Activated T-helper 2 cell treated with anti-CD3 and anti-CD28 coated beads, Interferon-gamma antibody, Interleukin-2, Interleukin-4, amounts not matched to agents 10 μg/mL and 5 μg/mL and 100 μg/mL, durations not matched to agents 14 hours and 24 hours and 36 hours (primary cell): ENCODE measurements at regions of chr15 and their contacts with region 1.

Region 1: GRCh38 chr15:31435261-31435911 is 108.8 kb downstream of the KLF13 start:
- DNase-seq: peak; percentile 80
- H3K4me3 Mint-ChIP-seq: peak overlapping the region; percentile 67
- H3K27ac Mint-ChIP-seq: peak overlapping the region; percentile 95
- H3K4me1 Mint-ChIP-seq: peaks cover 75% of the 10 kb centered on the region
- H3K27me3 Mint-ChIP-seq: no peaks in the 10 kb centered on the region

Region 2: GRCh38 chr15:31179693-31180092 is 255.7 kb before region 1 on chr15:
- intact Hi-C with region 1: no loop called
- DNase-seq: no peak
- H3K4me3 Mint-ChIP-seq: no peak overlapping the region
- H3K27ac Mint-ChIP-seq: no peak overlapping the region
- H3K4me1 Mint-ChIP-seq: peaks cover 6% of the 10 kb centered on the region
- H3K27me3 Mint-ChIP-seq: no peaks in the 10 kb centered on the region

Region 3: GRCh38 chr15:31215490-31216214 is 219.7 kb before region 1 on chr15:
- intact Hi-C with region 1: loop called (anchors 1 kb)
- DNase-seq: peak; percentile 76
- H3K4me3 Mint-ChIP-seq: peak overlapping the region; percentile 67
- H3K27ac Mint-ChIP-seq: peak overlapping the region; percentile 33
- H3K4me1 Mint-ChIP-seq: peaks cover 28% of the 10 kb centered on the region
- H3K27me3 Mint-ChIP-seq: no peaks in the 10 kb centered on the region

Region 4: DNA sequence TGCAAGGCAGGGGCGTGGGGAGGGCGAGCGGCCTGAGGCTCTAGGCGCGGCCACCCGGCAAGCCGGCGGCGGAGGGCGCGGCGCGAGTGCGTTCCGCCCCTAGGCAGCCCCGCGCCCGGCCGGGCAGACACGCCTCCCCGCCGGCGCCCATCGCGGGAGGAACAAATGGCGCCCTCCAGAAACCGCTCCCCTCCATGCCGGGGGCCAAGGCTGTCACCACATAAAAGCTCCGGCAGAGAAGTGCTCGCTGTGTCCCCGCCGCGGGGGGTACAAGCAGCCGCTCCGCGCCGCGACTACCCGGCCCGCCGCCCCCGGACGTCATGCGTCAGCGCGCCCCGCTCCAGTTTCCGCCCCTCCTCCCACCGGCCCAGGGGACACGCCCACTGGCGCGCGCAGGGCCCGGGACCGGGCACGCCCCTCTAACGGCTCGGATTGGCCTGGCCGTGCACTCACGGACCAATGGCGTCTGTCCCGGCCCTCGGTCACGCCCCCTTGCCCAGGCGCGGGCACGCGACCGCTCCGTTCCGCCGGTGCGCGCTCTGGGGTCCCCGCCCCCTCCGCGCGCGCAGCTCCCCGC is 109.1 kb before region 1 on chr15:
- intact Hi-C with region 1: loop called (anchors 1 kb)
- DNase-seq: peak; percentile 100
- H3K4me3 Mint-ChIP-seq: peak overlapping the region; percentile 77
- H3K27ac Mint-ChIP-seq: peak overlapping the region; percentile 77
- H3K4me1 Mint-ChIP-seq: peaks cover 39% of the 10 kb centered on the region
- H3K27me3 Mint-ChIP-seq: no peaks in the 10 kb centered on the region

Region 5: GRCh38 chr15:31365655-31366127 is 69.7 kb before region 1 on chr15:
- intact Hi-C with region 1: loop called (anchors 1 kb)
- DNase-seq: peak; percentile 72
- H3K4me3 Mint-ChIP-seq: peak overlapping the region; percentile 61
- H3K27ac Mint-ChIP-seq: peak overlapping the region; percentile 100
- H3K4me1 Mint-ChIP-seq: peaks cover 88% of the 10 kb centered on the region
- H3K27me3 Mint-ChIP-seq: no peaks in the 10 kb centered on the region

Region 6: DNA sequence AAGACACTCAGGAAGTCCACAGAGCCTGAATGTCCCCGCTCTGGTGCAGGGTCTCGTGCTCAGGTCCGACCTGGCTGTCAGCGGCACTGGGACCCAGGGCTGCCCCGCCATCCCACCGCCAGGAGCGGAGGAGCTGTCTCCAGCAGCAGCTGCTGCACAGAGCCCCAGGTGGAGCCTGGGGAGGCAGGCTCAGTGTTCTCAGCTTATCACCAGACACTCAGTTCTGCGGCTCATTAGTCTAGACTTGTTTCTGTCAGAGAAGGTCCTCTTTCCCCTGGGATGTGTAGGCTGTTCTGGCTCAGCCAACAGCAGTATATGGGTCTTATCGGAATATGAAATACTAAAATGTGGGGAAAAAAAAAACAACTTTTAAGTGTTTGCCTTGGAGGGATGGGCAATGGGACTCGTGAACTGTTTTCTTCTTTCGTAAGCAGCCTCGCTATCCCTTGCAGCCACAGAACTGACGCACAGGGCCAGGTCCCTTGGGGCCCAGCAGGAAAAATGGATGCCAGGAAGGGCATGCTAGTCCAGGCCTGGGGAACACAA is 32.8 kb before region 1 on chr15:
- intact Hi-C with region 1: no loop called
- DNase-seq: no peak
- H3K4me3 Mint-ChIP-seq: no peak overlapping the region
- H3K27ac Mint-ChIP-seq: no peak overlapping the region
- H3K4me1 Mint-ChIP-seq: peaks cover 42% of the 10 kb centered on the region
- H3K27me3 Mint-ChIP-seq: no peaks in the 10 kb centered on the region

Region 7: DNA sequence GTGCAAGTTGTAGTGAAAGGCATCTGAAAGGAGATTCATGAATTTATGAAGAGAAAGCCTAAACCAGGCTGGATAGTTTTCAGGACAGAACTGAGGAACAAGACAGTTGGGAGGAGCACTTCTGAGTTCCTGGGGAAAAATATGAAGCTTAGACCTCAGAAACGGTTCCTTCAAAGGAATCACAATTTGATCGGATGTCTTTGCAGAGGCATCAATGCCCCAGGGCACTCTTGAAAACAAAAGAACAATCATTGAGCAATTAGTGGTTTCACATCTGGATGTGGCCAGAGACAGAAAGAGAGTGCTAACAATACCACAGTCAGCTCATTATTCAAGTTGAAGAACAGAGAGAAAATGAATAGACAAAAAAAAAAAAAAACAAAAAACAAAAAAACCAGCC is 22.6 kb before region 1 on chr15:
- intact Hi-C with region 1: no loop called
- DNase-seq: no peak
- H3K4me3 Mint-ChIP-seq: no peak overlapping the region
- H3K27ac Mint-ChIP-seq: no peak overlapping the region
- H3K4me1 Mint-ChIP-seq: peaks cover 8% of the 10 kb centered on the region
- H3K27me3 Mint-ChIP-seq: peaks cover 4% of the 10 kb centered on the region

Region 8: DNA sequence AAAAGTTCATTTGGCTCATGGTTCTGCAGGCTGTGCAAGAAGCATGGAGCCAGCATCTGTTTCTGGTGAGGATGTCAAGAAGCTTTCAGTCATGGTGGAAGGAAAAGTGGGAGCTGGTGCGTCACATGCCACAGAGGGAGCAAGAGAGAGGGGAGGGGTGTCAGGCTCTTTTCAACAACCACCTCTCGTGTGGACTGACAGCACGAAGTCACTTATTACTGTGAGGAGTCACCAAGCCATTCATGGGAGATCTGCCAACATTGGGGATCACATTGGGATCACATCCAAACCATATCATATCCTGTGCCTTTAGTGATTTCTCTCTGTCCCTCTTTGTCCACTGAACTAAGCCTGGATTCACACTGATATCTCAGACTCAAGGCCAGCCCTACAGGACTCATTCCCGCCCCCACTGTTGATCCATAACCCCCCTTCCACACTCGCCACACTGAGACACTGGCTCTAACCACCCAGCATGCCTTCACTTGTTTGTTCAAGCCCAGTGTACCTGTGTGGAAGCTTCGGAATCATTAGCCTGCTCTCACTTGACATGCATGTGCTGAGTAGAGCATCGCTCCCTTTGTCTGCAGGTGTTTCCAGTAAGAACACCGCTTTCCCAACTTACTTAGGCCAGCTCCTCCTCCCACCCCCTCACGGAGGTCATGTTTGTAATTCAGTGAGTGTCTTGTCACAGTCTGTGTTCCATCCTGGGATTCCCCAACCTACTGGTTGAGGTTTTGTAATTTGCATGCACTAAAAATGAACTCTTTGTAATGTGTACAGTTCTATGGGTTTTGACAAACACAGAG is 23.4 kb after region 1 on chr15:
- intact Hi-C with region 1: loop called (anchors 1 kb)
- DNase-seq: no peak
- H3K4me3 Mint-ChIP-seq: peak overlapping the region; percentile 48
- H3K27ac Mint-ChIP-seq: peak overlapping the region; percentile 80
- H3K4me1 Mint-ChIP-seq: peaks cover 26% of the 10 kb centered on the region
- H3K27me3 Mint-ChIP-seq: no peaks in the 10 kb centered on the region

Region 9: DNA sequence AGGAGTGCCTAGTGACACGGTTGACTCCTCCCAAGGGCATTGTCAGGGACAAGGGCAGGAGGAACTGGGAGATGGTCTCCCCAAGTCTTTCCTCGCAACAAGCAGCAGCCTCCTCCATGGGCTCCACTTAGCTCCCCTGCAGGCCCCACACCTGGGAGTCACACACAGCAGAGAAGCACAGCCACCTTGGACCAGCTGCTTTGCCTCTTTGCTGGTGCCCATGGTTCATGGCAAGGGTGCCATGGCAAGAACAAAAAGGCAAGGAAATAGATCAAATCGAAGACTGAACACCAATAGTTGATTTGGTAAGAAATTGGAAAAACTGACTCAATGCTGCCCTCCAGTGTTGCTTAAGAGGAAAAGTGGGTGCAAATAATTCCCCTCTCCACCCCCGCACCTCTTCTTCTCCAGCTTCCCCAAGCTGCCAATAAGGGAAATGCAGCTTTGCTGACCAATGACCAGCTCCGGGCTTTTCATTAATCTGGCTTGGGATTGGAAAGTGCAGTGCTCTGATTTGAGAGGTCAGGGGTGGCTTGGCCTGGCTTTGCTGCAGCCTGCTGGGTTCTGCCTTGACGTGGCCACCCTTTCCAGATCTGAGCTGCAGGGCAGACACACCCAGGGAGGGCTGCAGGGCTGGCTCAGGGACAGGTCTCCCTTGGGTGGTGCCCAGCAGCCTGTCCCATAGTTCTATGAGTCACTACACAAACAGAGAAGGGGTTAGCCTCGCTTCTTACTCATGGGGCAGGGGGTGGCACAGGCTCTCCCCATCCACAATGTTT is 53.2 kb after region 1 on chr15:
- intact Hi-C with region 1: loop called (anchors 1 kb)
- DNase-seq: peak; percentile 38
- H3K4me3 Mint-ChIP-seq: peak overlapping the region; percentile 10
- H3K27ac Mint-ChIP-seq: peak overlapping the region; percentile 79
- H3K4me1 Mint-ChIP-seq: peaks cover 61% of the 10 kb centered on the region
- H3K27me3 Mint-ChIP-seq: no peaks in the 10 kb centered on the region

Region 10: GRCh38 chr15:32067115-32067514 is 631.7 kb after region 1 on chr15:
- intact Hi-C with region 1: no loop called
- DNase-seq: no peak
- H3K4me3 Mint-ChIP-seq: no peak overlapping the region
- H3K27ac Mint-ChIP-seq: no peak overlapping the region
- H3K4me1 Mint-ChIP-seq: no peaks in the 10 kb centered on the region
- H3K27me3 Mint-ChIP-seq: no peaks in the 10 kb centered on the region